ENCODE measurements at regions of chr10 and their contacts with region 1.

Region 1: GRCh38 chr10:1180836-1181235 is 124.7 kb downstream of the WDR37 start:
- DNase-seq: no peak
- H3K4me3 ChIP-seq: no peak overlapping the region
- H3K27ac ChIP-seq: no peak overlapping the region
- H3K4me1 ChIP-seq: peaks cover 0 to 7% (median 3%) of the 10 kb centered on the region in 4 experiments; a peak in 2 of 7 replicates
- H3K27me3 ChIP-seq: no peaks in the 10 kb centered on the region
- CTCF ChIP-seq: peak; percentile 18 to 51 (median 37); a peak in 2 of 4 replicates
- EP300 ChIP-seq: no peak
- POLR2A ChIP-seq: no peak
- RAD21 ChIP-seq: peak; percentile 23 to 45; a peak in 3 of 4 replicates

Region 2: GRCh38 chr10:1169981-1170866 is 10.6 kb before region 1 on chr10:
- CTCF ChIA-PET with region 1: interaction called, 26 read pairs
- POLR2A ChIA-PET with region 1: interaction called, 3 read pairs
- DNase-seq: no peak
- H3K4me3 ChIP-seq: no peak overlapping the region
- H3K27ac ChIP-seq: no peak overlapping the region
- H3K4me1 ChIP-seq: no peaks in the 10 kb centered on the region; a peak in 1 of 7 replicates
- H3K27me3 ChIP-seq: peaks cover 0 to 5% (median 0%) of the 10 kb centered on the region in 4 experiments; a peak in 2 of 7 replicates
- CTCF ChIP-seq: no peak
- EP300 ChIP-seq: no peak
- POLR2A ChIP-seq: no peak
- RAD21 ChIP-seq: no peak; a peak in 1 of 4 replicates

Region 3: DNA sequence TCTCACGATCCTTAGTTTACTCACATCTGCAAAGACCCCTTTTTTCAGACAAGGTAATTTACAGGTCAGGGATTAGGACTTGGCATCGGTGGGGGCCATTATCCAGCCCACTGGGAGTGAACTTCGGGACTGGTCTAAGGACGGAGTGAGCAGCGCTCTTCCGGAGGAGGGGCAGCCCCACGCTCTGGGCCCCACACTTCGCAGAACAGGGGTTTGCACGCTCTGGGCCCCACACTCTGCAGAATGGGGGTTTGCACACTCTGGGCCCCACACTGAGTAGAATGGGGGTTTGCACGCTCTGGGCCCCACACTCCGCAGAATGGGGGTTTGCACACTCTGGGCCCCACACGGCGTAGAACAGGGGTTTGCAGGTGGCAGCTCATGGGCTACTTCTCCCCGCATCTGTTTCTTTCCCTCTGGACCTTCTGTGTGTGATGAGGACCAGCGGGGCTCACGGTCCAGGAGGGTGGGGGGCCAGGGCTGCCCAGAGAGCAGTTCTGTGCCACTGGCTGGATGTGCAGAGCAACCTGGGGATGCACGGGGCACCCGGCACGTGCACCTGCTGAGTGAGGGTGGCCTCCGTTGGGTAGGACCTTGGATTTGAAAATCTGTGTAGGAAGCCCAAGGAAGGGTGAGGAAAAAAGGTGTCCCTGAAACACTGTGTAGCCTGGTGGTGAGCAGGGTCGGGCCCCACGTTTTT is 10.1 kb after region 1 on chr10:
- CTCF ChIA-PET with region 1: interaction called, 12 read pairs
- POLR2A ChIA-PET with region 1: interaction called, 3 read pairs
- DNase-seq: no peak
- H3K4me3 ChIP-seq: no peak overlapping the region
- H3K27ac ChIP-seq: no peak overlapping the region
- H3K4me1 ChIP-seq: peaks cover 3 to 5% (median 4%) of the 10 kb centered on the region in 4 experiments; a peak in 5 of 7 replicates
- H3K27me3 ChIP-seq: peaks cover 0 to 2% (median 0%) of the 10 kb centered on the region in 4 experiments; a peak in 3 of 7 replicates
- CTCF ChIP-seq: no peak
- EP300 ChIP-seq: no peak
- POLR2A ChIP-seq: no peak
- RAD21 ChIP-seq: no peak

Measured in H1 (cell line).